ENCODE measurements at regions of chr2 and their contacts with region 1.

Region 1: DNA sequence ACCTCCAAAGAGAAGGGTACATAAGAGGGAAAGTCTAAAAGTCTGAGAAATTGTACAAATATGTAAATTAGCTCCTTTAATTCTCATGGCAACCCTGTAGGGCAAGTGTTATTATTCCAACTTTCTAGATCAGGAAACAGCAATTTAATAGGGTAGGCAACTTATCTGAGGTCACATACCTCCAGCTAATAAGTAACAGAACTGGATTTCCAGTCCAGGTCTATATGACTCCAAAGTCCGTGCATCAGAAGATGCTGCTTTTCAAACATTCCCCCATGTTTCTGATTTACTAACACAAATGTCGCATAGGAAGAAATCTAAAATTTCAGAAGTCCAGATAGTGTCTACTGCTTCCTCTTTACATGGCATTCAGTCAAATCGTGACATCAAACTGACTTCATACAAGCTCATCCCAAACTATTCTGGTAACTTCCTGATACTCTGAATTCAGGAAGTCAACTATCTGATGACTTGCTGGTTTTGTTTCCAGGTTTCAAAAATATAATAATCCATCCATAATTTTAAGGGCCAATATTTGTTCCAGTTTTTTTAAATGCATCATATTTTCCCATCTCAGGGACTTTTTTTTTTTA is 419.3 kb upstream of the ACVR2A start:
- DNase-seq: peak in 1 of 2 experiments; percentile 48
- H3K4me3 ChIP-seq: no peak overlapping the region
- H3K4me3 Mint-ChIP-seq: peak overlapping the region; percentile 42
- H3K27ac Mint-ChIP-seq: peak overlapping the region; percentile 73
- H3K4me1 ChIP-seq: peaks cover 47% of the 10 kb centered on the region
- H3K4me1 Mint-ChIP-seq: peaks cover 39% of the 10 kb centered on the region
- H3K27me3 ChIP-seq: no peaks in the 10 kb centered on the region
- H3K27me3 Mint-ChIP-seq: no peaks in the 10 kb centered on the region
- CTCF ChIP-seq: no peak

Region 2: DNA sequence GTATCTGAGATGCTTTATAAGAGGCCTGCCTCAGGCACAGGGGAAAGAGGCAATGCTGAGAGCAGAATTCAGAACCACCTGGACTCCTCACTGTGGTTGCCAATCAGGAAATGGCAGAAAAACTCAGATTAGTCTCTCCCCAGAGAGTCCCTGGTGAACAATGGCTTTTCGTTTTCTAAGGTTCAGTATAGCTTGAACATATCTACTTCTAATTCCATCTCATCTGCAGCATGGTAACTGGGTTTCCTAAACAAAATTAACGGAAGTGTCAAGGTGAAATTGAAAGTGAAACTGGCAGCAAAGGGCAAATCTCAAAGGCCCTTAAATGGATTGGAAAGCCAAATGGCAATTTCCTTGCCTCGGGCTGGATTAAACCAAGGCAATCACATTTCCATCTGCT is 60.9 kb before region 1 on chr2:
- CTCF ChIA-PET with region 1: no interaction called
- POLR2A ChIA-PET with region 1: no interaction called
- intact Hi-C with region 1: loop called (anchors 5 kb)
- DNase-seq: no peak
- H3K4me3 ChIP-seq: no peak overlapping the region
- H3K4me3 Mint-ChIP-seq: no peak overlapping the region
- H3K27ac Mint-ChIP-seq: no peak overlapping the region
- H3K4me1 ChIP-seq: 0 out of 2 replicates have a peak, but pooled peaks cover 4% of the 10 kb centered on the region
- H3K4me1 Mint-ChIP-seq: no peaks in the 10 kb centered on the region
- H3K27me3 ChIP-seq: no peaks in the 10 kb centered on the region
- H3K27me3 Mint-ChIP-seq: no peaks in the 10 kb centered on the region
- CTCF ChIP-seq: no peak

Region 3: DNA sequence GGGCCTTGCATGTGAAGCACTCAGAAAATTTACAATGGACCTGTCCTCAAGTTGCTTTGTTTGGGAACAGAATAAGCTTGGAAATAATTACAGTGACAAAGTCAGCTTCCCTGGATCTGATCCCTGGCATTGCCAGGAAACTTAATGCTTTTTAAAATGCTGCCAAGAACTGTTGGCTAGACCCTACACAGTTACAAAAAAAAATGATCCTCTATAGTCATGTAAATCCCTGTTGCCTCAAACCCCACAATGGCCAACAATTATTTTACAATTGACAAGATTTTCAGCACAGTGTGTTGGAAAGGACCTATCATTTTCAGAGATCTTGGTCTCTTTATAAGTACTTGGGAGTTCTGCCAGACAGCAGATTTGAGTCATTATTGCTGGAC is 51.1 kb before region 1 on chr2:
- CTCF ChIA-PET with region 1: no interaction called
- POLR2A ChIA-PET with region 1: no interaction called
- intact Hi-C with region 1: loop called (anchors 2 kb)
- DNase-seq: no peak
- H3K4me3 ChIP-seq: no peak overlapping the region
- H3K4me3 Mint-ChIP-seq: no peak overlapping the region
- H3K27ac Mint-ChIP-seq: no peak overlapping the region
- H3K4me1 ChIP-seq: peaks cover 13% of the 10 kb centered on the region
- H3K4me1 Mint-ChIP-seq: peaks cover 7% of the 10 kb centered on the region
- H3K27me3 ChIP-seq: no peaks in the 10 kb centered on the region; the same call in 1 of the 2 replicates
- H3K27me3 Mint-ChIP-seq: no peaks in the 10 kb centered on the region
- CTCF ChIP-seq: no peak

Region 4: DNA sequence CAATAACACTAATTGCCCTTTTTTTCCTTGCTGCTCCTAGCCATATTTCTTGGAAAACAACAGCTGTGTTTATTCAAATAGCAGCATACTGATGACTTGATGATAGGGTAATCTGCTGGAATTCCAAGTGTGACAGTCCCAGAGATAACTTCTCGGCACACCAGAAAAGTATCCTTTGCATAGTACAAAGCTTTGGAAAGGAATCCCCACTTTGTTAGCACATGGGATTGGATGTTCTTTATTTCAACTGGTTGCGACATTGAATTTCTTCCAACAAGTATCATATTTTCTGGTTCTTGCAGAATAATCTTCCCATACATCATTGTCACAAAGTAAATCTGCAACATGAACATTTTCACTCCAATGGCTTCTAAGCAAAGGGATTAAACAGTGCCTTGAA is 26.5 kb before region 1 on chr2:
- CTCF ChIA-PET with region 1: no interaction called
- POLR2A ChIA-PET with region 1: interaction called, 3 read pairs
- intact Hi-C with region 1: loop called (anchors 2 kb)
- DNase-seq: peak; percentile 42 to 58
- H3K4me3 ChIP-seq: no peak overlapping the region
- H3K4me3 Mint-ChIP-seq: no peak overlapping the region
- H3K27ac Mint-ChIP-seq: no peak overlapping the region
- H3K4me1 ChIP-seq: peaks cover 17% of the 10 kb centered on the region
- H3K4me1 Mint-ChIP-seq: peaks cover 6% of the 10 kb centered on the region
- H3K27me3 ChIP-seq: no peaks in the 10 kb centered on the region
- H3K27me3 Mint-ChIP-seq: no peaks in the 10 kb centered on the region
- CTCF ChIP-seq: no peak

Measured in Caco-2 (cell line).